ENCODE measurements at regions of chr17 and their contacts with region 1.

Region 1: GRCh38 chr17:50139950-50140871 is 10.3 kb upstream of the SAMD14 start:
- DNase-seq: peak; percentile 68 to 88 (median 77)
- ATAC-seq: peak; percentile 93
- H3K4me3 ChIP-seq: peak overlapping the region; percentile 55
- H3K4me3 Mint-ChIP-seq: peak overlapping the region; percentile 33 to 91 (median 72)
- H3K27ac ChIP-seq: peak overlapping the region; percentile 42
- H3K27ac Mint-ChIP-seq: peak overlapping the region in 8 of 9 donors; percentile 56 to 92 (median 80)
- H3K4me1 ChIP-seq: peaks cover 37 to 42% of the 10 kb centered on the region in 2 donors
- H3K4me1 Mint-ChIP-seq: peaks cover 49 to 80% (median 63%) of the 10 kb centered on the region in 7 donors
- H3K27me3 ChIP-seq: no peaks in the 10 kb centered on the region
- H3K27me3 Mint-ChIP-seq: no peaks in the 10 kb centered on the region

Region 2: GRCh38 chr17:50151041-50151936 is 11.1 kb after region 1 on chr17:
- CTCF ChIA-PET with region 1: interaction called, 56 read pairs
- POLR2A ChIA-PET with region 1: interaction called, 42 read pairs
- intact Hi-C with region 1: loop called (anchors 1 kb)
- DNase-seq: peak; percentile 73 to 88 (median 79)
- ATAC-seq: peak; percentile 84
- H3K4me3 ChIP-seq: peak overlapping the region; percentile 94
- H3K4me3 Mint-ChIP-seq: peak overlapping the region; percentile 82 to 95 (median 87)
- H3K27ac ChIP-seq: peak overlapping the region; percentile 74
- H3K27ac Mint-ChIP-seq: peak overlapping the region; percentile 71 to 96 (median 84)
- H3K4me1 ChIP-seq: peaks cover 26 to 37% of the 10 kb centered on the region in 2 donors
- H3K4me1 Mint-ChIP-seq: peaks cover 11 to 52% (median 44%) of the 10 kb centered on the region in 7 donors
- H3K27me3 ChIP-seq: no peaks in the 10 kb centered on the region
- H3K27me3 Mint-ChIP-seq: no peaks in the 10 kb centered on the region

Region 3: DNA sequence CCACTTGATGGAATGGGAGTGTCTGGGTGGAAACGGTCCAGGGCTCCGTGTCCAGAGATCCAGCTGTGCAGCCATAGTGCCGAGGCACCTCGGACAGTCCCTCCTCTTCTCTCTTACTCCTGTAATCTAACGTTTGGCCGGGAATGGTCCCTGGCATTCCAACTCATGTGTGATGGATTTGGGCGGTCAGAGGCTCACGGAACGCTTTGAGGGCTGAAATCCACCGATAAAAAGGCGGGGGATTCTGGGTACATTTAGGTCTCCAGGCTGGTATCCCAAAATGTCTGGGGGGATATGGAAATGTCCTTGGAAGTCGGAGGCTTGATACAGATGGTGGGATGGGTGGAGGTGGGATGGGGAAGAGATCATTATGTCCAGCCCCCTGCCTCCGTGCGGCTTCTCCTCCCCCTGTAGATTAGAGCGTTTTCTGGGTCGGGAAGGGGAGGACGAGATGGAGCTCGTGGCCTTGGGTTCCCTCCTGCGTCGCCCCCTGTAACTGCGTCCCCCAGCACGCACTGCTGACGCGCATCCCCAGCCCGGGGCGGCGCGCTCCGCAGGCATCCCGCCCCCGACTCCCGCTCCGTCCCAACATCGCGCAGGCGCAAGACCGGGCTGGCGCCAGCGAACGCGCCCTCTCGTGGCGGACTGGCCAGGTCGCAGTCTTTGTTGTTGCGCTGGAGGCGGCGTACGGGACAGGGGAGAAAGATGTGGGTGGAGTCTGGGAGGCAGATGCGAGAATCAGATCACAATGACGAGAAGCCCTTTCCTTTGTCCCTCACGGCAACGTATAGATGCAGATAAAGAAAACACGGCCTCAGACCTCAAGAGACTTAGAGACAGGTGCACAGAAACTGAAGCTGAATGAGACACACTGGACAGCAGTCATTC is 21.1 kb after region 1 on chr17:
- CTCF ChIA-PET with region 1: interaction called, 59 read pairs
- POLR2A ChIA-PET with region 1: interaction called, 18 read pairs
- intact Hi-C with region 1: loop called (anchors 1 kb)
- DNase-seq: peak; percentile 89 to 98 (median 93)
- ATAC-seq: peak; percentile 99
- H3K4me3 ChIP-seq: peak overlapping the region; percentile 63
- H3K4me3 Mint-ChIP-seq: peak overlapping the region; percentile 66 to 87 (median 78)
- H3K27ac ChIP-seq: peak overlapping the region; percentile 70
- H3K27ac Mint-ChIP-seq: peak overlapping the region; percentile 64 to 99 (median 97)
- H3K4me1 ChIP-seq: peaks cover 18 to 34% of the 10 kb centered on the region in 2 donors
- H3K4me1 Mint-ChIP-seq: peaks cover 22 to 47% (median 39%) of the 10 kb centered on the region in 7 donors
- H3K27me3 ChIP-seq: no peaks in the 10 kb centered on the region
- H3K27me3 Mint-ChIP-seq: peaks cover 0 to 12% (median 0%) of the 10 kb centered on the region in 5 donors

Region 4: DNA sequence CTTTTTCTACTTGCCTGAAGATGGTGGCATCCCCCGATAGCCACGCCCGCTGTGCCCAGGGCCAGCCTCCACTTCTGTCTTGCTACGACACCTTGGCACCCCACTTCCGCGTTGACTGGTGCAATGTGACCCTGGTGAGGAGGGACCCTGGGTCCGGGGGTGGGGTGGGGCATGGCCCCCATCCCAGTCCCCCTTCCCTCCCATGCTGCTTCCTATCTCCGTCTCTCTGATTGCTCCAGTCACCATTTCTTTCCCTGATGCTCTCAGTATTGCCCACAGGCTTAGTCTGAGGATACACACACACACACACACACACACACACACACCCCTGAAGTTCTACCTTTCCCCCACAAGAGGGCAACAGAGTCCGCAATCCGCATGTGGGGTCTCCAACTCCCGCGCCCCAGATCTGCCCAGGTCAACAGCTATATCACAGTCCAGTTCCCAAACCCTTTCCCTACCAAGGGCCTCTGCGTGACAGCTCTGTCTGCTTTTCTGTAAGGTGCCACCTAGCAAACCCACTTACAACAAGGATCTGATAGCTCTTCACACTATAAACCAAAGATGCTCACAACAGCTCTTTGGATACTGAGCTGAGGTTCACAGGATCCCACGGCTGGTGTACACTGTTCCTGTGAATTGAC is 29.0 kb after region 1 on chr17:
- CTCF ChIA-PET with region 1: interaction called, 16 read pairs
- POLR2A ChIA-PET with region 1: no interaction called
- intact Hi-C with region 1: no loop called
- DNase-seq: peak; percentile 50 to 78 (median 71)
- ATAC-seq: peak; percentile 93
- H3K4me3 ChIP-seq: peak overlapping the region; percentile 52
- H3K4me3 Mint-ChIP-seq: peak overlapping the region; percentile 42 to 78 (median 62)
- H3K27ac ChIP-seq: peak overlapping the region; percentile 38
- H3K27ac Mint-ChIP-seq: peak overlapping the region; percentile 24 to 93 (median 79)
- H3K4me1 ChIP-seq: peaks cover 9 to 10% of the 10 kb centered on the region in 2 donors
- H3K4me1 Mint-ChIP-seq: peaks cover 11 to 14% (median 12%) of the 10 kb centered on the region in 7 donors
- H3K27me3 ChIP-seq: no peaks in the 10 kb centered on the region
- H3K27me3 Mint-ChIP-seq: no peaks in the 10 kb centered on the region

Region 5: GRCh38 chr17:50177983-50178834 is 38.0 kb after region 1 on chr17:
- CTCF ChIA-PET with region 1: interaction called, 5 read pairs
- POLR2A ChIA-PET with region 1: no interaction called
- intact Hi-C with region 1: loop called in 1 of 2 experiments (anchors 1 kb)
- DNase-seq: peak in 7 of 9 donors; percentile 23 to 47 (median 29)
- ATAC-seq: peak; percentile 91
- H3K4me3 ChIP-seq: no peak overlapping the region
- H3K4me3 Mint-ChIP-seq: peak overlapping the region in 9 of 10 donors; percentile 33 to 83 (median 73)
- H3K27ac ChIP-seq: no peak overlapping the region
- H3K27ac Mint-ChIP-seq: peak overlapping the region in 5 of 9 donors; percentile 38 to 91 (median 48)
- H3K4me1 ChIP-seq: peaks cover 0 to 4% of the 10 kb centered on the region in 2 donors
- H3K4me1 Mint-ChIP-seq: peaks cover 13 to 24% (median 20%) of the 10 kb centered on the region in 7 donors
- H3K27me3 ChIP-seq: no peaks in the 10 kb centered on the region
- H3K27me3 Mint-ChIP-seq: no peaks in the 10 kb centered on the region

Measured in naive thymus-derived CD4-positive, alpha-beta T cell (primary cell).